MCF 10A (cell line): ENCODE measurements at regions of chr11 and their contacts with region 1.

Region 1: DNA sequence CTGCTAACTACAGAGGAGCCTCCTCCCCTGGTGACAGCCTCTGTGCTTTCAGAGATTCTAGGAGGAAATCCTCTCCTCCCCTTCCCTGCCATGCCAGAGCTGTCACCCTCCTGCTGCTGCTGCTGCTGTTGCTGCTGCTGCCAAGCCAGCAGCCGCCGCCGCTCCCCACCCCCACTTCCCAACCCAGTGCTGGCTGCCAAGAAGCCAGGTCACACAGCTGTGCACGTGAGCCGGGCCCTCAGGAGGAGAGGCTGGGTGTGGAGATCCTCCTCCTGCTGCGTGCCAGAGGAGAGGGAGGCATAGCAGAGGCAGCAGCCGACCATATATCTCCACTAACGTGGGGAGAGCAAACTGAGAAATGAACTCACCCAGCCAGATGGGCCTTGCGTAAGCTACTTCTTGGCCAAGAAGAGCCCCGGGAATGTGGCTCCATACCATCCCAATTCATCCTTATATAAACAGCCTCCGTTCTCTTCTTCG is 12.4 kb downstream of the CRY2 start:
- DNase-seq: peak; percentile 92
- H3K4me3 Mint-ChIP-seq: no peak overlapping the region
- H3K27ac Mint-ChIP-seq: peak overlapping the region; percentile 8
- H3K4me1 Mint-ChIP-seq: peaks cover 19% of the 10 kb centered on the region
- H3K27me3 Mint-ChIP-seq: no peaks in the 10 kb centered on the region
- CTCF ChIP-seq: no peak

Region 2: GRCh38 chr11:45872513-45873356 is 13.0 kb after region 1 on chr11:
- CTCF ChIA-PET with region 1: interaction called, 11 read pairs
- POLR2A ChIA-PET with region 1: interaction called, 16 read pairs
- intact Hi-C with region 1: no loop called
- DNase-seq: peak; percentile 75
- H3K4me3 Mint-ChIP-seq: no peak overlapping the region
- H3K27ac Mint-ChIP-seq: no peak overlapping the region
- H3K4me1 Mint-ChIP-seq: no peaks in the 10 kb centered on the region
- H3K27me3 Mint-ChIP-seq: no peaks in the 10 kb centered on the region
- CTCF ChIP-seq: peak; percentile 76

Region 3: DNA sequence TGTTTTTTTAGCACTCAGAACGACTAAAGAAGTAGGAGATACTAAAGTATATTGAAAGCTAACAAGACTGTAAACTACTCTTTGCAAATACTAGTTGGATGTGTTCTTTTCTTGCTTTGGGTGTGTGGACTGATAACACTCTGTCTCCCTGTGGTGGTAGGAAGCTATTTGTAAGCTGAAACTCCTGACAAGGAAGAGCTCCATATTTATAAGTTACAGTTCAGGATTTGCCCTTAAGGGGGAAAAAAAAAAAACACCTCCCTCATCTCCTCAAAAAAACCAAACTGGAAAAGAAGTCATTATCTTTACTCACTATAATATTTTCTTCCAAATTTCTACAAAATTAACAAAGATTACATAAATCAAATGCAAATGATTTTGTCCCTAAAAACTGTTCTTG is 157.6 kb after region 1 on chr11:
- CTCF ChIA-PET with region 1: no interaction called
- POLR2A ChIA-PET with region 1: no interaction called
- intact Hi-C with region 1: no loop called
- DNase-seq: no peak
- H3K4me3 Mint-ChIP-seq: no peak overlapping the region
- H3K27ac Mint-ChIP-seq: no peak overlapping the region
- H3K4me1 Mint-ChIP-seq: no peaks in the 10 kb centered on the region
- H3K27me3 Mint-ChIP-seq: no peaks in the 10 kb centered on the region
- CTCF ChIP-seq: no peak